HEK293 (cell line): ENCODE measurements at regions of chr18 and their contacts with region 1.

Region 1: GRCh38 chr18:50356036-50356945 is 18.6 kb upstream of the SKA1 start:
- H3K4me3 ChIP-seq: no peak overlapping the region
- H3K27ac ChIP-seq: no peak overlapping the region
- H3K4me1 ChIP-seq: peaks cover 3% of the 10 kb centered on the region; the same call in 1 of the 2 replicates
- CTCF ChIP-seq: peak; percentile 25; the same call in 1 of the 2 replicates

Region 2: DNA sequence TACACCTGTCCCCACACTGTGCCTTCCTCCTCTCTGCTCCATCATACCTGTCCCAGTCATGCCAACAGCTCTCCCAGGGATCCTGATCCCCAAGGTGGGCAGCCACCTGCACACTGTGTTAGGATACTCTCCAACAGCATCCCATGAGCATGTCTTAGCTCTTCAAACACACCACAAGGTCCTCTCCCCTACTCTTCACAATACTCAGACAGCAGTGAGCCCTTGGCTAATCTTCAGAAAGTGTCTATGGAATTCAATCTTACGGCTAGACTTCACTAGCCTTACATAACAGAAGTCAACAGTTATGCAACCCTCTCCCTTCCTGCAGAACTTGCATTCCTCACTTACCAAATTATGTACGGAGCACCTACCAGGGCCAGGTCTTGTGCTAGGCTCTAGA is 241.2 kb before region 1 on chr18:
- CTCF ChIA-PET with region 1: no interaction called
- POLR2A ChIA-PET with region 1: no interaction called
- H3K4me3 ChIP-seq: no peak overlapping the region
- H3K27ac ChIP-seq: no peak overlapping the region
- H3K4me1 ChIP-seq: peaks cover 18% of the 10 kb centered on the region
- CTCF ChIP-seq: no peak

Region 3: GRCh38 chr18:50203801-50204604 is 152.3 kb before region 1 on chr18:
- CTCF ChIA-PET with region 1: interaction called, 67 read pairs
- POLR2A ChIA-PET with region 1: no interaction called
- H3K4me3 ChIP-seq: no peak overlapping the region
- H3K27ac ChIP-seq: no peak overlapping the region
- H3K4me1 ChIP-seq: no peaks in the 10 kb centered on the region
- CTCF ChIP-seq: peak; percentile 83

Region 4: DNA sequence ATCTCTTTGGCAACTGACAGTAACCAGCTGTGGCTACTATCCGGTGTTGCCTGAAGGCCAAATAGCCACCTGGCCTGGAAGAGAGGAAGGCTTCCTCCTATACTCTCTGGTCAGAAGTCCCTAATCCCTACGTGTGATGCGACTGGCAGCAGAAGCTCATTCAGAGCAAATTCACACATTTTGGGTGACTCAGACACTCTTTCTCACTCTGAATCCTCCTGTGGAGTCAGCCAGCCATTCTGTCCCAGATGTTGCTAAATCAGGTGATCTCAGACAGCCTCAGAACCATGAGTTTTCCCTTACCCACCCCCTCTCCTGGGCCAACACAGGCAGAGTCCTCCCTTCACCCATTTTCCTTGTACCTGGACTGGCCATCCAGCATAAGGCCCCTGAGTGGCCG is 124.7 kb before region 1 on chr18:
- CTCF ChIA-PET with region 1: interaction called, 11 read pairs
- POLR2A ChIA-PET with region 1: no interaction called
- H3K4me3 ChIP-seq: no peak overlapping the region
- H3K27ac ChIP-seq: no peak overlapping the region
- H3K4me1 ChIP-seq: no peaks in the 10 kb centered on the region
- CTCF ChIP-seq: no peak

Region 5: GRCh38 chr18:50266248-50266704 is 90.0 kb before region 1 on chr18 and contains the start of gene CFAP53:
- CTCF ChIA-PET with region 1: interaction called, 14 read pairs
- POLR2A ChIA-PET with region 1: no interaction called
- H3K4me3 ChIP-seq: peak within 1 kb of the TSS; percentile 75
- H3K27ac ChIP-seq: peak within 1 kb of the TSS; percentile 31; the same call in 1 of the 2 replicates
- H3K4me1 ChIP-seq: no peaks in the 10 kb centered on the region; the same call in 1 of the 2 replicates
- CTCF ChIP-seq: no peak; the same call in 1 of the 2 replicates

Region 6: GRCh38 chr18:50374753-50375391 is 18.6 kb after region 1 on chr18 and contains the start of gene SKA1:
- CTCF ChIA-PET with region 1: interaction called, 13 read pairs
- POLR2A ChIA-PET with region 1: no interaction called
- H3K4me3 ChIP-seq: peak within 1 kb of the TSS; percentile 91
- H3K27ac ChIP-seq: peak within 1 kb of the TSS; percentile 75
- H3K4me1 ChIP-seq: no peaks in the 10 kb centered on the region
- CTCF ChIP-seq: no peak